IMR-90 (cell line): ENCODE measurements at regions of chr9 and their contacts with region 1.

Region 1: DNA sequence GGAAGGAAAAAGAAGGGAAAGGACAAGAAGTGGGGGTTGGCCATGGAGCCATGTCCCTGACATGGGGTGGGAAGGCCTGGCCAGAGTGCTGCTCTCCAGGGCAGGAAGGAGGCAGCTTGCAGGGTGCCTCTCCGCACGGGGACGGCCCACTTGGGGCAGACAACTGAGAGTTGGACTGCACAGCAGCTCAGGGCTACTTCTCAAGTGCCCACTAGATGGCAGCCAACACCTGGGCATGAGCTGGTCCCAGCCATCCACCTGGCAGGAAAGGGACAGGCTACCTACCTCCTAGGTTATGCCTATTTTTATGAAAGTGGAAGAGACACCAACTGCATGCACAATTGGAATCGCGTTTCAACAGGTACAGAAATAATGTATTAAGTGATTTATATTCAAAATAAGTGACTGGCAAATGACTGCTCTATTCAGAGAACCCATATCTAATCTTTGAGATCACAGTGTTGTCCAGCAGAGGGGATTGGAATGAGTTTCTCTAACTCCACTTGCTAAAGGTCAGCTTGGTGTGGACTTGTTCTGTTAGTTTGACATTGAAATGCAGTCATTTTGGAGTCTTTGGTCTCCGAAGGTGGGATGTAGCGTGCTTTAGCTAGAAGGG is 113.4 kb downstream of the SYK start:
- DNase-seq: peak; percentile 76
- ATAC-seq: peak; percentile 96
- H3K4me3 ChIP-seq: no peak overlapping the region
- H3K27ac ChIP-seq: no peak overlapping the region
- H3K4me1 ChIP-seq: peaks cover 2% of the 10 kb centered on the region
- H3K27me3 ChIP-seq: no peaks in the 10 kb centered on the region
- CTCF ChIP-seq: peak; percentile 83
- POLR2A ChIP-seq: no peak
- RAD21 ChIP-seq: peak; percentile 98

Region 2: GRCh38 chr9:91089405-91090129 is 174.6 kb after region 1 on chr9:
- CTCF ChIA-PET with region 1: no interaction called
- POLR2A ChIA-PET with region 1: no interaction called
- dilution Hi-C with region 1: no loop called
- in situ Hi-C with region 1: no loop called
- intact Hi-C with region 1: loop called (anchors 5 kb)
- DNase-seq: peak; percentile 73
- ATAC-seq: peak; percentile 86
- H3K4me3 ChIP-seq: no peak overlapping the region
- H3K27ac ChIP-seq: peak overlapping the region; percentile 21
- H3K4me1 ChIP-seq: peaks cover 11% of the 10 kb centered on the region
- H3K27me3 ChIP-seq: no peaks in the 10 kb centered on the region
- CTCF ChIP-seq: peak; percentile 60
- POLR2A ChIP-seq: peak; percentile 41; the same call in 1 of the 2 replicates
- RAD21 ChIP-seq: peak; percentile 79

Region 3: DNA sequence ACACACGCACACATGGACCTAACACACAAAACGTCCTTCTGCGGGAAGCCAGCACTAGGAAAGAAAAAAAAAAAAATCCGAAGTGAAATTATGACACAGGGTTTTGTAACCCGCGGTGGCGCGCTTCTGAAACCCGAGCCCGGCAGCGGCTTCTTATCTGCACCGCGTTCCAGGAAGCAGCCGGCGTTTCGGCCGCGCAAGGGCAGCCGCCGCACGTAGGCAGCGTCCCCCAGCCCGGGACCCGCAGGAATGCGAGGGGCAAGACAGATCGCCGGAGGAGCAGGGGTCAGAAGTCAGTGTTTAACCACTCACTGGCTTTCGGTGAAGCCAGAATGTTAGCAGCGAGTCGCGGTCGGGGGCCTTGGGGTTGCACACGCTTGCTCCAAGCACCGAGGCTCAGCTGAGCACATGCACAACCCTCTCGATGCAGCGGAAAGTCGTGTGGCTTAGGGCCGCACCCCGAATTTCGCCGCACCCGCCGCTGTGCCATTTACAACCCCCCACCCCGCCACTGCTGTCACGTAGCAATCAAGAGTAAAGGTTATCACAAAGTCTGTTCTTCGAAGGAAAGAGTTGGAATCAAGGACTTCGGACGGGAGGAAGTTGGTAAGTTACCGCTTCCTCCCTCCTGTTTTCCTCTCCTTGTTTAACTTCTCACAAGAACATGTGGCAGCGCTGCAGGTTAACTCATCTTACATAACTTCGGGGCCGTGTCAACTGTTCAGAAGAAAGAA is 278.8 kb after region 1 on chr9:
- CTCF ChIA-PET with region 1: interaction called, 3 read pairs
- POLR2A ChIA-PET with region 1: no interaction called
- dilution Hi-C with region 1: no loop called
- in situ Hi-C with region 1: no loop called
- intact Hi-C with region 1: loop called (anchors 2 kb)
- DNase-seq: peak; percentile 96
- ATAC-seq: peak; percentile 61
- H3K4me3 ChIP-seq: peak overlapping the region; percentile 15
- H3K27ac ChIP-seq: peak overlapping the region; percentile 94
- H3K4me1 ChIP-seq: peaks cover 37% of the 10 kb centered on the region
- H3K27me3 ChIP-seq: no peaks in the 10 kb centered on the region
- CTCF ChIP-seq: no peak
- POLR2A ChIP-seq: peak; percentile 64
- RAD21 ChIP-seq: peak; percentile 4

Region 4: DNA sequence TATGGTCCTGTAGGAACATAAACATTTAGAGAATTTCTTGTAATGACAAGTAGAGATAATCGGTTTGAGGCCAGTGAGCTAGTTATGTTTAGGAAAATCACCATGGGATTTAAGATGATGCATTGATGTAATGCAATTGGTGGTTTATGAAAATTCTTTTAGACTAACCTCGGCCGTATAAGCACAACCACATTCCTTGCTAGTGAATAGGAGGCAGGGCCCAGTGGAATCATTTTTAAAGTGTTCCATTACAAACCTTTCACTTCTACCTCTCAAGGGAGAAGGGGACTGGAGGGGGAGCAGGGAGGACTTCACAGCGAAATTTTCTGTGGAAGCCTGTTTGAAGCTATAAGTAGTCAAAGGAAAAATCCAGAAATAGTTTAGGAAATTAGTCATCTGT is 580.5 kb after region 1 on chr9:
- CTCF ChIA-PET with region 1: no interaction called
- POLR2A ChIA-PET with region 1: no interaction called
- dilution Hi-C with region 1: no loop called
- in situ Hi-C with region 1: no loop called
- intact Hi-C with region 1: loop called (anchors 5 kb)
- DNase-seq: peak; percentile 98
- ATAC-seq: peak; percentile 93
- H3K4me3 ChIP-seq: no peak overlapping the region
- H3K27ac ChIP-seq: peak overlapping the region; percentile 69; the same call in 1 of the 2 replicates
- H3K4me1 ChIP-seq: peaks cover 16% of the 10 kb centered on the region
- H3K27me3 ChIP-seq: no peaks in the 10 kb centered on the region
- CTCF ChIP-seq: no peak
- POLR2A ChIP-seq: peak; percentile 88
- RAD21 ChIP-seq: 0 out of 2 replicates have a peak, but pooled peaks have one; percentile 4

Region 5: DNA sequence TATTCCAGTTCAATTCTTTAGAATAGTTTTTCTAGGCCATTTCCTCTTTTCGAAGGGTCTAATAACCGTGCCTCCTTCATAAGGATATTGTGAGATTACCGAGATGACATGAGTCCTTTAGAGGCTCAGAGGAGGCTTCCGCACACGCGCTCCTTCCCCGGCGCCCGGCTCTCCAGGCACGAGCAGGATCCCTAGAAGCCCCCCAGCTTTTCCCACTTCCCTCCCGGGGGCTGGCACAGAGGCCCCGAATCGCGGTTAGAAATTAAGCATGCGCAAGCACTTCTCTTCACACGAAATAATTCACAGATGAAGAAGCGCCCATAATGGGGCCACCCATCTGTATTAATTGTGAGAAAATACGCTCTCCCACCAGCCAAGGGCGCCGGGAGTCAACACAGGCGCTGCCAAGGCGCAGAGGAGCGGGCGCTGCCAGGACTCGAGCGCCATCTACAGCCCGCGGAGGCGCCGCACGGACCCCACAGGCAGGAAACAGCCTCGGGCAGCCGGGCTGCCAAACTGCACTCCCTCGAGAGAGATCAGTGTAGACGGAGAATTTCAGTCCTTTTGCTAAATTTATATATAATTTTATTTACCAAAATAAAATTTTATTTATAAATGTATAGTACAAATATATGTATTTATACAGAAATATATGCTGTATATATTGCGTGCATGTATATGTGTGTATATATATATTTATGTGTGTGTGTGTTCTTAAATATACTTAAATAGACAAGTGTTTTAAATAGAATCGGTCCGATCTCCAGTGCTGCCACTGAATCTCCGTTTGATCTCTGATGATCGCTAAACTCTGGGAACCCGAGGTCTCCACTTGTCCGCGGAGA is 766.7 kb after region 1 on chr9:
- CTCF ChIA-PET with region 1: no interaction called
- POLR2A ChIA-PET with region 1: no interaction called
- dilution Hi-C with region 1: no loop called
- in situ Hi-C with region 1: loop called (anchors 5 kb)
- intact Hi-C with region 1: loop called (anchors 2 kb)
- DNase-seq: peak; percentile 64
- ATAC-seq: peak; percentile 89
- H3K4me3 ChIP-seq: no peak overlapping the region
- H3K27ac ChIP-seq: no peak overlapping the region
- H3K4me1 ChIP-seq: peaks cover 11% of the 10 kb centered on the region
- H3K27me3 ChIP-seq: no peaks in the 10 kb centered on the region
- CTCF ChIP-seq: peak; percentile 90
- POLR2A ChIP-seq: no peak
- RAD21 ChIP-seq: peak; percentile 94

Region 6: GRCh38 chr9:91734371-91734981 is 819.5 kb after region 1 on chr9:
- CTCF ChIA-PET with region 1: interaction called, 3 read pairs
- POLR2A ChIA-PET with region 1: no interaction called
- dilution Hi-C with region 1: no loop called
- in situ Hi-C with region 1: loop called (anchors 5 kb)
- intact Hi-C with region 1: no loop called
- DNase-seq: peak; percentile 58
- ATAC-seq: peak; percentile 95
- H3K4me3 ChIP-seq: no peak overlapping the region
- H3K27ac ChIP-seq: no peak overlapping the region
- H3K4me1 ChIP-seq: peaks cover 2% of the 10 kb centered on the region; the same call in 1 of the 2 replicates
- H3K27me3 ChIP-seq: no peaks in the 10 kb centered on the region
- CTCF ChIP-seq: peak; percentile 90
- POLR2A ChIP-seq: no peak
- RAD21 ChIP-seq: peak; percentile 70